SK-N-SH (cell line): ENCODE measurements at regions of chr2 and their contacts with region 1.

Region 1: GRCh38 chr2:110812726-110813645 is 80.6 kb downstream of the ACOXL start:
- DNase-seq: no peak
- H3K4me3 ChIP-seq: no peak overlapping the region
- H3K27ac ChIP-seq: no peak overlapping the region
- H3K4me1 ChIP-seq: no peaks in the 10 kb centered on the region; a peak in 1 of 4 replicates
- H3K27me3 ChIP-seq: no peaks in the 10 kb centered on the region; the same call in 1 of the 2 replicates
- CTCF ChIP-seq: no peak
- EP300 ChIP-seq: no peak
- RAD21 ChIP-seq: no peak

Region 2: GRCh38 chr2:110800611-110801402 is 12.2 kb before region 1 on chr2:
- CTCF ChIA-PET with region 1: interaction called, 22 read pairs
- POLR2A ChIA-PET with region 1: no interaction called
- DNase-seq: no peak
- H3K4me3 ChIP-seq: no peak overlapping the region
- H3K27ac ChIP-seq: no peak overlapping the region
- H3K4me1 ChIP-seq: no peaks in the 10 kb centered on the region
- H3K27me3 ChIP-seq: peaks cover 16% of the 10 kb centered on the region; the same call in 1 of the 2 replicates
- CTCF ChIP-seq: no peak
- EP300 ChIP-seq: no peak
- RAD21 ChIP-seq: no peak

Region 3: DNA sequence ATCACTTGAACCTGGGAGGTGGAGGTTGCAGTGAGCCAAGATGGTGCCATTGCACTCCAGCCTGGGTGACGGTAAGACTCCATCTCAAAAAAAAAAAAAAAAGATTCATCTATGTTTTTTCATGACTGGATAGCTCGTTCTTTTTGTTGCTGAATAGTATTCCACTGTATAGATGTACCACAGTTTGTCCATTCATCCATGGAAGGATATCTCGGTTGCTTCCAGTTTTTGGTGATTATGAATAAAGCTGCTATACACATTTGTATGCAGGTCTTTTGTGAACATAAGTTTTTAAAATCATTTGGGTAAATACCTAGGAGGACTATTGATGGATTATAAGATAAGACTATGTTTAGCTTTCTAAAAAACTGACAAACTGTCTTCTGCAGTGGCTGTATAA is 10.2 kb after region 1 on chr2:
- CTCF ChIA-PET with region 1: interaction called, 13 read pairs
- POLR2A ChIA-PET with region 1: no interaction called
- DNase-seq: no peak
- H3K4me3 ChIP-seq: no peak overlapping the region
- H3K27ac ChIP-seq: no peak overlapping the region
- H3K4me1 ChIP-seq: no peaks in the 10 kb centered on the region
- H3K27me3 ChIP-seq: no peaks in the 10 kb centered on the region; the same call in 1 of the 2 replicates
- CTCF ChIP-seq: no peak
- EP300 ChIP-seq: no peak
- RAD21 ChIP-seq: no peak

Region 4: DNA sequence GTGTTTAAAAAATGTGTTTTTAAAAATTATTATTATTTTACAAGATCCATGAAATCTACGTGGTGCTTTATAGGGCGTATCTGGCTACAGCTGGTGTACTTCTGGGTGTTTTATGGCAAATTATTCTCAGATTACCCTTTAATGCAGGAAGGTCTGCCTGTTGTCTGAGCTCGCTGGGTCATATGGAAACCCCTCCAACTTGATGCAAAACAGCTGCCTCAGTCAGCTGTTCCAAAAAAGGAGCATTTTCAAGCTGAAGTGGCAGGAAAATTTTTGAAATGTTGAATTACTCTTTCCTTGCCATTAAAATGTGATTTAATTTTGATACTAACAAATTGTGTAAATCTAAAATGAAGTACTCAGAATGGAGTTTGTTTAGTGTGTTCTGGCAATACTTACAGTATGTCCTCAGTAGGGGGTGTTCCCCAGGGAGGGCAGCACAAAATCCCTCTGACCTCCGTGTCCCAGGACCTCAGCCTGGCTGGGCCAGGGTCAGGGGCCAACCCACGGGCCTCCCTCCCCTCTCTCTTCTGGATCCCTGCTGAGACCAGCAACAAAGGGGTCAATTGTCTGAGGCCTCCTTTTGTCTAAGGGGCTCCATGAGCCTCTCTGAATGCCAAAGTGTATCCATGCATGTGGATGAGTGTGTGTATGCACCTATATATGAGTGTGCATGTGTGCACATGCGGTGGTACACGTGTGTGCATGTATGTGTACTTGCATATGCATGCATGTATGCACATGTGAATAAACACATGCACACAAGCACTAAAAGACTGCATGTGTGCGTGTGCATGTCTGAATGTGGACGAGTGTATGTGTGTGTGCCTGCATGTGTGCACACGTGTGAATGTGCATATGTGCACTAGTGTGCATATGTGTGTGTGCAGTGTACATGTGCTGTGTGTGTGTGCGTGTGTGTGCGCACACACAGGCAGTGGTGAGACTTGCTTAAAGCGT is 24.7 kb after region 1 on chr2:
- CTCF ChIA-PET with region 1: interaction called, 13 read pairs
- POLR2A ChIA-PET with region 1: no interaction called
- DNase-seq: peak; percentile 49
- H3K4me3 ChIP-seq: no peak overlapping the region
- H3K27ac ChIP-seq: peak overlapping the region in 1 of 2 experiments; percentile 39; a peak in 1 of 4 replicates
- H3K4me1 ChIP-seq: peaks cover 0 to 28% of the 10 kb centered on the region in 2 experiments; a peak in 2 of 4 replicates
- H3K27me3 ChIP-seq: peaks cover 26% of the 10 kb centered on the region; the same call in 1 of the 2 replicates
- CTCF ChIP-seq: no peak
- EP300 ChIP-seq: peak in 1 of 2 experiments; percentile 50; a peak in 1 of 4 replicates
- RAD21 ChIP-seq: no peak

Region 5: GRCh38 chr2:111120253-111121027 is 307.5 kb after region 1 on chr2 and contains the start of gene BCL2L11:
- CTCF ChIA-PET with region 1: interaction called, 23 read pairs
- POLR2A ChIA-PET with region 1: interaction called, 6 read pairs
- DNase-seq: peak; percentile 97
- H3K4me3 ChIP-seq: peak within 1 kb of the TSS; percentile 84 to 92
- H3K27ac ChIP-seq: peak within 1 kb of the TSS; percentile 69 to 90
- H3K4me1 ChIP-seq: peaks cover 0 to 13% of the 10 kb centered on the region in 2 experiments; a peak in 2 of 4 replicates
- H3K27me3 ChIP-seq: no peaks in the 10 kb centered on the region
- CTCF ChIP-seq: peak; percentile 52
- EP300 ChIP-seq: no peak
- RAD21 ChIP-seq: peak; percentile 50; the same call in 1 of the 2 replicates
- polyA plus RNA-seq, gene BCL2L11: 2.4 and 3.3 TPM in 2 replicates